ENCODE measurements at regions of chr1 and their contacts with region 1.

Region 1: DNA sequence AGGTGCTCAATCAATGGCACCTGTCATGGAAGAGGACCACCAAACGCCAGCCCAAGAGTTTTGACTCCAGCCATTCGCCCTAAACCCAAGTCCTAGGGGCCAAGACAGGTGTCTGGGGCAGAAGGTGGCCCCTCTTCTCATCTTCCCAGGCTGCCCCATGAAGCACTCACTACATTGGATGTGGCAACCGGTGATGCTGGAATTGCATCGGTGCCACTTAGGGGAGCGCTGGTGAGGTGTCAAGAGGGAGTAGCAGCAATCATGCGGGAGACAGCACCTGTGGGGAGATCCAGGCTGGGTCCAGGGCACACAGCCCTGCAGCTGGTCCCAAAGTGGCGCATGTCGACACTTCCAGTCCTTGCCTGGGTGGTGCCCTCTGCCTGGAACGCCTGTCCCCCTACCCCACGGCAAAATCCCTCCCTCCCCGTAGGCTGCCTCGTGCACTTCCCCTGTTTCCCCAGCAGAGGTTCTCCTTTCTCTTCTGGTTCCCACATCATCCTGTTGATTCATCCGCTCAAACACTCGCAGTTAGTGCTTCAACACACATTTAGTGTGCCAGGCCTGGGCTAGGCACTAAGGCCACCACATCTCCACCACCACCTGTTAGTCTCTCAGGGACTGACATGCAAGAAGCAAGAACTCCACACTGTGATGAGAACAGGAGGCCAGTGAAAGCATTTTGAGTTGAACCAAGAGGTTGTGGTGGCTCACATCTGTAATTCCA is 18.5 kb downstream of the PLA2G2D start:
- DNase-seq: peak; percentile 58
- H3K4me3 Mint-ChIP-seq: no peak overlapping the region
- H3K27ac Mint-ChIP-seq: no peak overlapping the region
- H3K4me1 Mint-ChIP-seq: no peaks in the 10 kb centered on the region
- H3K27me3 Mint-ChIP-seq: no peaks in the 10 kb centered on the region
- CTCF ChIP-seq: peak; percentile 45

Region 2: GRCh38 chr1:19918057-19918456 is 182.7 kb before region 1 on chr1:
- CTCF ChIA-PET with region 1: no interaction called
- intact Hi-C with region 1: loop called (anchors 5 kb)
- DNase-seq: peak; percentile 77
- H3K4me3 Mint-ChIP-seq: no peak overlapping the region
- H3K27ac Mint-ChIP-seq: no peak overlapping the region
- H3K4me1 Mint-ChIP-seq: peaks cover 18% of the 10 kb centered on the region
- H3K27me3 Mint-ChIP-seq: no peaks in the 10 kb centered on the region
- CTCF ChIP-seq: peak; percentile 79

Region 3: GRCh38 chr1:20151906-20152598 is 51.3 kb after region 1 on chr1:
- CTCF ChIA-PET with region 1: interaction called, 16 read pairs
- intact Hi-C with region 1: loop called (anchors 1 kb)
- DNase-seq: peak; percentile 84
- H3K4me3 Mint-ChIP-seq: peak overlapping the region; percentile 64
- H3K27ac Mint-ChIP-seq: peak overlapping the region; percentile 90
- H3K4me1 Mint-ChIP-seq: peaks cover 15% of the 10 kb centered on the region
- H3K27me3 Mint-ChIP-seq: no peaks in the 10 kb centered on the region
- CTCF ChIP-seq: peak; percentile 84

Region 4: GRCh38 chr1:20165522-20165951 is 64.7 kb after region 1 on chr1:
- CTCF ChIA-PET with region 1: no interaction called
- intact Hi-C with region 1: no loop called
- DNase-seq: no peak
- H3K4me3 Mint-ChIP-seq: no peak overlapping the region
- H3K27ac Mint-ChIP-seq: no peak overlapping the region
- H3K4me1 Mint-ChIP-seq: no peaks in the 10 kb centered on the region
- H3K27me3 Mint-ChIP-seq: peaks cover 12% of the 10 kb centered on the region
- CTCF ChIP-seq: peak; percentile 25

Region 5: GRCh38 chr1:20194757-20195461 is 94.1 kb after region 1 on chr1:
- CTCF ChIA-PET with region 1: no interaction called
- intact Hi-C with region 1: loop called (anchors 1 kb)
- DNase-seq: peak; percentile 66
- H3K4me3 Mint-ChIP-seq: no peak overlapping the region
- H3K27ac Mint-ChIP-seq: no peak overlapping the region
- H3K4me1 Mint-ChIP-seq: peaks cover 11% of the 10 kb centered on the region
- H3K27me3 Mint-ChIP-seq: no peaks in the 10 kb centered on the region
- CTCF ChIP-seq: peak; percentile 50

Measured in Calu3 (cell line).